AG04450 (cell line): ENCODE measurements at regions of chr5 and their contacts with region 1.

Region 1: DNA sequence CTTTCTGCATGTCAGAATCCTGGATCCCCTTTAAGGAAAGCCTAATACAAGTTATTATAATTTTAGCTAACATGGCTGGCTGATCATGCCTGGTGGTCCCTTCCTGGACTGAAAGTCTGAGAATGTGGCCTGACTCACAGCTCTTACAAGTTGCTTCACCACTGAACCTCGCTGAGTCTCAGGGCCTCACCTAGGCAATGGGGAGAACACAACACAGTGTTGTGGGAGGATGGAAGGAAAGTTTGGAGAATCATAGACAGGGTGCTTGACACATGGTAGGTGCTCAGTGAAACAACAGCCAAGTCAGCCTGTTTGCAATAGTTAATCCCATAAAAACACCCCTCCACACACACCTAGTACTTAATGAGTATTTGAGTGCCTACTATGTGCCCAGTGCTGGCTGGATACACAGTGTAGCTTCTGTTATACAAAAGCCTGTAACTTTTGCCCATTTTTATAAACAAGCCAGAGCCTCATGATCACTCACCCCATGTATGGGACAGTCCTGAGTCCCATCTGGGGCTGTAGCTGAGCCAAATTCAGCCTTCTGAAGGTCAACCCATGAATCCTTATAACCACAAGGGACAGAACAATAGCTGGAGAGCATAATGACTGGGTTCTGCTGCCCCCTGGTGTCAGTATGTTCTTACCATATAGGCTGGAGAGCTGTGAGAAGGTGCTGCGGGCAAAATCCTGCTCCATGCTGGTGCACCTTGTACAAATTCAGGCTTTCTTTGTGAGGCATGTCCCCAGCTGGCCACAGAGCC is 3.9 kb downstream of the ACSL6 start:
- DNase-seq: peak; percentile 37
- H3K4me3 ChIP-seq: no peak overlapping the region
- H3K27ac ChIP-seq: no peak overlapping the region
- H3K27me3 ChIP-seq: peaks cover 41% of the 10 kb centered on the region
- CTCF ChIP-seq: peak; percentile 76

Region 2: GRCh38 chr5:131423056-131423455 is 584.5 kb before region 1 on chr5:
- CTCF ChIA-PET with region 1: interaction called, 38 read pairs
- POLR2A ChIA-PET with region 1: no interaction called
- DNase-seq: peak; percentile 1
- H3K4me3 ChIP-seq: no peak overlapping the region
- H3K27ac ChIP-seq: no peak overlapping the region
- H3K27me3 ChIP-seq: no peaks in the 10 kb centered on the region
- CTCF ChIP-seq: peak; percentile 65

Region 3: GRCh38 chr5:131810510-131811249 is 196.9 kb before region 1 on chr5:
- CTCF ChIA-PET with region 1: interaction called, 44 read pairs
- POLR2A ChIA-PET with region 1: no interaction called
- DNase-seq: no peak
- H3K4me3 ChIP-seq: no peak overlapping the region
- H3K27ac ChIP-seq: no peak overlapping the region
- H3K27me3 ChIP-seq: no peaks in the 10 kb centered on the region
- CTCF ChIP-seq: no peak

Region 4: GRCh38 chr5:132183723-132184122 is 176.1 kb after region 1 on chr5:
- CTCF ChIA-PET with region 1: no interaction called
- POLR2A ChIA-PET with region 1: no interaction called
- DNase-seq: no peak
- H3K4me3 ChIP-seq: no peak overlapping the region
- H3K27ac ChIP-seq: no peak overlapping the region
- H3K27me3 ChIP-seq: no peaks in the 10 kb centered on the region
- CTCF ChIP-seq: no peak